AG04450 (cell line): ENCODE measurements at regions of chr18 and their contacts with region 1.

Region 1: DNA sequence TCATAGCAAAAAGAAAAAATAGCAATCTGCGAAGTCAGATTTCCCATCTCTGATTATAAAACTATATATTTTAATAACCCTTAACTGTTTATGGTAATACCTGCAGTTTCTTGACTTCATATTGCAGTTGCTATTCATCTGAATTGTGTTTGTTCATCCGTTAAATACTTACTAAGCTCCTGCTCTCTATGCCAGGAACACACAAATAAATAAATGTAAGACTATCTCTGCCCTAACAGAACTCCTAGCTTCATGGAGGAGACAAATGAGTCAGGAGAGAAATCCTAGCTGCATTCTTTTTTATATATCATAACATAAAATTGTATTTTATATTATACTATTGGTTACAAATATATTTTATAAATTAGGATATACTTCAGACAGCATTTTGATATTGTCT is 61.2 kb downstream of the MALT1 start:
- DNase-seq: no peak
- H3K4me3 ChIP-seq: no peak overlapping the region
- H3K27ac ChIP-seq: no peak overlapping the region
- H3K27me3 ChIP-seq: no peaks in the 10 kb centered on the region
- CTCF ChIP-seq: no peak

Region 2: GRCh38 chr18:58535340-58536201 is 196.9 kb before region 1 on chr18:
- CTCF ChIA-PET with region 1: no interaction called
- POLR2A ChIA-PET with region 1: no interaction called
- DNase-seq: no peak
- H3K4me3 ChIP-seq: no peak overlapping the region
- H3K27ac ChIP-seq: no peak overlapping the region
- H3K27me3 ChIP-seq: no peaks in the 10 kb centered on the region
- CTCF ChIP-seq: no peak

Region 3: DNA sequence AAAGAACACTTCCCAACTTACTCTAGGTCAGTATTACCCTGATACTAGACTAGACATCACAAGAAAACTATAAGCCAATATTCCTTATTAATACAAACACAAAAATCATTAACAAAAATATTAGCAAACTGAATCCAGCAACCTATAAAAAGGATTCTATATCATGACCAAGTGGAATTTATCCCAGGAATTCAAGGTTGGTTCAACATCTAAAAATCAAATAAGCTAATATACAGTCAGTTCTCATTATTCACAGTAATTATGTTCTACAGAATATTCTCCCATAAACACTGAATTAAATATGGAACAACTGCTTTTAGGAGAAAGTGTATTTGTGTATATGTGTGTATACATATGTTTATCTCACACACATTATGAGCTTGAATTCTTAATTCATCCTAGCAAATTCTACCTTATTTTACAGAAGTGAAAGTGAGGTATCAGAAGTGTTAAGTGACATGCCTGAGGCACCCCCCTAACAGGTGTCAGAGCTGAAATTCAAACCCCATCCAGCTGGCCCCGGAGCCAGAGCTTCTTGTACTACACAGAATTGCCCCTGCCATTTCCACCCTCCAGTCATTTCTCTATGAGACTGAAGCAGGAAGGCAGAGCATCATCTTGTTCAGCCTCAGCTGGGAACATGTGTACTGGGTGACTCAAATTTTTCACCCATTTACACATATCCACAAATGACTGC is 16.6 kb after region 1 on chr18:
- CTCF ChIA-PET with region 1: interaction called, 10 read pairs
- POLR2A ChIA-PET with region 1: no interaction called
- DNase-seq: no peak
- H3K4me3 ChIP-seq: no peak overlapping the region
- H3K27ac ChIP-seq: no peak overlapping the region
- H3K27me3 ChIP-seq: no peaks in the 10 kb centered on the region
- CTCF ChIP-seq: no peak